CD8-positive, alpha-beta T cell (primary cell): ENCODE measurements at regions of chr21 and their contacts with region 1.

Region 1: GRCh38 chr21:33229784-33230544 is at the start of gene IFNAR2:
- DNase-seq: peak; percentile 56 to 85 (median 74)
- ATAC-seq: peak; percentile 86
- H3K4me3 ChIP-seq: peak within 1 kb of the TSS; percentile 90 to 97
- H3K4me3 Mint-ChIP-seq: peak within 1 kb of the TSS; percentile 92
- H3K27ac ChIP-seq: peak within 1 kb of the TSS; percentile 74 to 75
- H3K27ac Mint-ChIP-seq: peak within 1 kb of the TSS; percentile 95
- H3K4me1 ChIP-seq: peaks cover 46% of the 10 kb centered on the region
- H3K4me1 Mint-ChIP-seq: peaks cover 51% of the 10 kb centered on the region
- H3K27me3 ChIP-seq: no peaks in the 10 kb centered on the region
- H3K27me3 Mint-ChIP-seq: no peaks in the 10 kb centered on the region
- CTCF ChIP-seq: no peak
- total RNA-seq, gene IFNAR2: 21.9 to 30.0 TPM

Region 2: DNA sequence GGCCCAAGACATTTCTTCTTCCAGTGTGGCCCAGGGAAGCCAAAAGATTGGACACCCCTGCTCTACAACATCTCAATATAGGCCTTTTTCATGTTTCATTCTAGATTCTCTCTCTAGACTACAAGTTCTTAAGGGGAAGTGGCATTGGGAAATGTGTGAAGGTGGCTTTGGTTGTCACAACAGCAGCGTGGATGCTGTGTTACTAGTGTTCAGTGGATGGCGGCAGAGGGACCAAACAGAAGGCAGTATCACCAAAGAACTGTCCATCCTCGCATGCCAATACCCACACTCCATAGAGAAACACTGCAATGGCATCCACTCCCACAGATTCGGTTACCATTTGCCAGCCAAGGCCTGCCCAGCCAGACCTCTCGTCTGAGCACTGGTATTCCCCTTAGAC is 24.5 kb before region 1 on chr21:
- CTCF ChIA-PET with region 1: interaction called, 4 read pairs
- POLR2A ChIA-PET with region 1: no interaction called
- intact Hi-C with region 1: loop called (anchors 2 kb)
- DNase-seq: peak in 4 of 9 experiments; percentile 31 to 76 (median 52)
- ATAC-seq: peak; percentile 43
- H3K4me3 ChIP-seq: peak overlapping the region in 1 of 2 experiments; percentile 15
- H3K4me3 Mint-ChIP-seq: peak overlapping the region; percentile 67
- H3K27ac ChIP-seq: peak overlapping the region; percentile 25 to 55
- H3K27ac Mint-ChIP-seq: peak overlapping the region; percentile 84
- H3K4me1 ChIP-seq: peaks cover 53% of the 10 kb centered on the region
- H3K4me1 Mint-ChIP-seq: peaks cover 62% of the 10 kb centered on the region
- H3K27me3 ChIP-seq: no peaks in the 10 kb centered on the region
- H3K27me3 Mint-ChIP-seq: no peaks in the 10 kb centered on the region
- CTCF ChIP-seq: no peak

Region 3: DNA sequence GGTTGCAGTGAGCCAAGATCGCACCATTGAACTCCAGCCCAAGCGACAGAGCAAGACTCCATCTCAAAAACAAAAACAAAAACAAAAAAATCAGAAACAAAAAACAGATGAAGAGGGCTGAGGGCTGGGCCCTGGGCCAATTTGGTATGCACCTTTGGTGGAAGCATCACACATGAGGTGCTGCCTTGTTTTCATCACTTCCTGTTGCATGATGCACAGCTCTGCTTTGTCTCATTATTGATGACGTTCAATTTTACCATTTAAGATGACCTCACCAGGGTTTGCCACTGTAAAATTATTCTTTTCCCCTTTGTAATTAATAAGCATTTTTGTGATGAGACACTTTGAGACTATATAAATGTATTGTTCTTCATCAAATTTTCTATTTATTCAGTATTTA is 10.0 kb before region 1 on chr21:
- CTCF ChIA-PET with region 1: interaction called, 3 read pairs
- POLR2A ChIA-PET with region 1: no interaction called
- intact Hi-C with region 1: loop called in 1 of 2 experiments (anchors 1 kb)
- DNase-seq: peak in 3 of 9 experiments; percentile 46 to 68 (median 47)
- ATAC-seq: peak; percentile 52
- H3K4me3 ChIP-seq: no peak overlapping the region
- H3K4me3 Mint-ChIP-seq: no peak overlapping the region
- H3K27ac ChIP-seq: no peak overlapping the region
- H3K27ac Mint-ChIP-seq: no peak overlapping the region
- H3K4me1 ChIP-seq: peaks cover 48% of the 10 kb centered on the region
- H3K4me1 Mint-ChIP-seq: peaks cover 48% of the 10 kb centered on the region
- H3K27me3 ChIP-seq: no peaks in the 10 kb centered on the region
- H3K27me3 Mint-ChIP-seq: no peaks in the 10 kb centered on the region
- CTCF ChIP-seq: no peak

Region 4: GRCh38 chr21:33244082-33244778 is 14.3 kb after region 1 on chr21:
- CTCF ChIA-PET with region 1: interaction called, 3 read pairs
- POLR2A ChIA-PET with region 1: interaction called, 3 read pairs
- intact Hi-C with region 1: loop called in 1 of 2 experiments (anchors 2 kb)
- DNase-seq: peak in 1 of 9 experiments; percentile 9
- ATAC-seq: peak; percentile 41
- H3K4me3 ChIP-seq: no peak overlapping the region
- H3K4me3 Mint-ChIP-seq: peak overlapping the region; percentile 68
- H3K27ac ChIP-seq: peak overlapping the region; percentile 9 to 54
- H3K27ac Mint-ChIP-seq: peak overlapping the region; percentile 95
- H3K4me1 ChIP-seq: peaks cover 82% of the 10 kb centered on the region
- H3K4me1 Mint-ChIP-seq: peaks cover 85% of the 10 kb centered on the region
- H3K27me3 ChIP-seq: no peaks in the 10 kb centered on the region
- H3K27me3 Mint-ChIP-seq: no peaks in the 10 kb centered on the region
- CTCF ChIP-seq: no peak

Region 5: DNA sequence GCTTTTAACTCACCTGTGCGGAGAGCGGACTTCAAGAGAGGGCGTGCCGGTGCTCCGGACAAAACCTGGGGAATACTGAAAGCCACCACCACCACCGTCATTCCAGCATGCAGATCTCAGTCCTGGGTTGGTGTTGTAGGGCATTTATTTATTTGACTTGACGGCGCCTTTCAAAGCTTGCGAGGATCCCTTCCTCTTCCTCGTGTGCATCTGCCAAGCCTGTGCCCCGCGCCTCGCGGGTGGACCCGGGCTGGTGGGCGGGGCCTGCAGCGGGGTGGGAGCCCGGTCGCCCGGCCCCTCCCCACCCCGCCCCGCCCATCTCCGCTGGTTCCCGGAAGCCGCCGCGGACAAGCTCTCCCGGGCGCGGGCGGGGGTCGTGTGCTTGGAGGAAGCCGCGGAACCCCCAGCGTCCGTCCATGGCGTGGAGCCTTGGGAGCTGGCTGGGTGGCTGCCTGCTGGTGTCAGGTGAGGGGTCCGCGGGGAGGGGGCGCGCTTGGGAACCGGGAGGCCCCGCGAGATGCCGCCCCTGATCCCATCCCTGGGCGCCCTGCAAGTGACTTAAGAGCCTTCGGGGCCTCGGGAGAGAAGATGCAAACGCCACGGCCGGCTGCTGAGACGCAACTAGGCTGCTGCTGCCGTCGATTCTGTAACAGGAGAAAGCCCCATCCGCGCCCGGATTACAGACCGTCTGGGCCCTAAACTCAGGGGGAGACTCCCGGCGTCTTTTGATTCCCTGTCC is 36.3 kb after region 1 on chr21 and contains the start of gene IL10RB:
- CTCF ChIA-PET with region 1: interaction called, 7 read pairs
- POLR2A ChIA-PET with region 1: interaction called, 6 read pairs
- intact Hi-C with region 1: loop called (anchors 1 kb)
- DNase-seq: peak; percentile 21 to 88 (median 72)
- ATAC-seq: peak; percentile 85
- H3K4me3 ChIP-seq: peak within 1 kb of the TSS; percentile 84 to 89
- H3K4me3 Mint-ChIP-seq: peak within 1 kb of the TSS; percentile 93
- H3K27ac ChIP-seq: peak within 1 kb of the TSS; percentile 70 to 75
- H3K27ac Mint-ChIP-seq: peak within 1 kb of the TSS; percentile 95
- H3K4me1 ChIP-seq: peaks cover 46% of the 10 kb centered on the region
- H3K4me1 Mint-ChIP-seq: peaks cover 66% of the 10 kb centered on the region
- H3K27me3 ChIP-seq: no peaks in the 10 kb centered on the region
- H3K27me3 Mint-ChIP-seq: no peaks in the 10 kb centered on the region
- CTCF ChIP-seq: no peak
- total RNA-seq, gene IL10RB: 7.4 to 8.2 TPM